Head of caudate nucleus (tissue), 42 donors: ENCODE measurements at regions of chr9 and their contacts with region 1.

Region 1: GRCh38 chr9:109903515-109904138 is 123.6 kb downstream of the PALM2AKAP2 start:
- DNase-seq: peak in 40 of 42 donors; percentile 28 to 88 (median 61)

Region 2: GRCh38 chr9:110058304-110058953 is 154.8 kb after region 1 on chr9:
- intact Hi-C with region 1: loop called (anchors 10 kb)
- DNase-seq: peak in 24 of 42 donors; percentile 12 to 77 (median 39)

Region 3: DNA sequence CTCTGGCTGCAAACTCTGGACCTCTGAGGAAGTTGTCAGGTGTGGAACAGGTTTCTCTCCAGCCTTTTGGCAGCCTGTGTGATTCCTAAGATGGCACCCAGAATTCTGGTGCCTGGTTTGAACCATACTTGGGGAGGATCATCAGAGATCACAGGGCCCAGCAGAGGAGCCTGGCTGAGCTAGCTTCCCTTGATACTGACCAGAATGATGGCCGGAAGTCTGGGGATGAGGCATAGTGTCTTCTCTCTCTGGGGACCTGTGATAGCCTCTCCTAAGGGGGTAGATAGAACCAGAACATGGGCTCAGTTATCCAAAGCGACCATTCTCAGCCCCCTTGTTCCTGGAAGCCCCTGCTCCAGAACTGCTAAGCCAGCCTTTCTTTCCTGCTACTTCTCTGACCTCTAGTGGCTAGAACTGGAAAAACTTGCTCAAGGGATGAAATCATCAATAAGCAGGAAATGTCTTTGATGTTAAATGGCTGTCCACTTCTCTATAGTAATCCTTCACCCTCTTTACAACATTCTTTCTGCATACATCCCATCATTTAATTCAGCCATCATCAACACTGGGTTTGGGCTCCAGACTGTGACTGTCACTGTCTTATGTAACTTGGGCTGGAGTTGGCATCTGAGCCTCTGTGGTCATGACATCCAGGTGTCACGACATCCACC is 249.2 kb after region 1 on chr9:
- intact Hi-C with region 1: loop called (anchors 5 kb)
- DNase-seq: peak in 5 of 42 donors; percentile 24 to 66 (median 49)